Motor neuron (in vitro differentiated cells): ENCODE measurements at regions of chr12 and their contacts with region 1.

Region 1: GRCh38 chr12:57309420-57309819 is 58.4 kb upstream of the STAC3 start:
- ATAC-seq: peak in 2 of 8 experiments; percentile 26 to 47
- H3K4me3 ChIP-seq: no peak overlapping the region
- H3K27ac ChIP-seq: no peak overlapping the region
- H3K4me1 ChIP-seq: peaks cover 0 to 3% of the 10 kb centered on the region in 2 donors

Region 2: DNA sequence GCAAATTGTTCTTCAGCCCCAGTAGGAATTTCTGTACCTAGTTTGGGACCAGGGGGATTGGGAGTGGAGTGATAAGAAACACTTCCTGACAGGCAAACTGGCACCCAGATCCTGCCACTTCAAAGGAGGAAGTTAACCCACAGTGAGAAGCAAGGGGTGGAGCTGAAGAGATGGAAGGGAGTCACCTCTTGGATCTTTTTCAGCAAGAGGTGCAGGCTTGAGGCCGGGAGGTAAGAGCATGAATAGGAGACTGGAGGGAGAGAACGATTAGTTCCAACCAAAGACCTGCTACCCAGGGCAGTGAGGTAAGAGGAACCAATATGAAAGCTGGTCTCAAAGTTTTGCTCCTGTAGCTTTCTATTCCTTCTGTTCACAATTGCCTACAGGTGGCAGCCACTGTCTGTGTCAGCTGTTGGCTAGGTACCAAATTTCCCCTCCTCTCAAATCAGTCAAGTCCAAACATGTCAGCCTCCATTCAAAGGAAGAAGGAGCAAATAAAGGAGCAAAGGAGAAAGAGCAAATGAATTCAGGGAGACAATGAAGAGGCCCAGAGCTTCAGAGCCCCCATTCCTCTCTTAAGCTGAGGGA is 278.2 kb before region 1 on chr12:
- in situ Hi-C with region 1: no loop called
- ATAC-seq: peak in 7 of 8 experiments; percentile 20 to 78 (median 40)
- H3K4me3 ChIP-seq: no peak overlapping the region
- H3K27ac ChIP-seq: no peak overlapping the region
- H3K4me1 ChIP-seq: peaks cover 17 to 21% of the 10 kb centered on the region in 2 donors

Region 3: DNA sequence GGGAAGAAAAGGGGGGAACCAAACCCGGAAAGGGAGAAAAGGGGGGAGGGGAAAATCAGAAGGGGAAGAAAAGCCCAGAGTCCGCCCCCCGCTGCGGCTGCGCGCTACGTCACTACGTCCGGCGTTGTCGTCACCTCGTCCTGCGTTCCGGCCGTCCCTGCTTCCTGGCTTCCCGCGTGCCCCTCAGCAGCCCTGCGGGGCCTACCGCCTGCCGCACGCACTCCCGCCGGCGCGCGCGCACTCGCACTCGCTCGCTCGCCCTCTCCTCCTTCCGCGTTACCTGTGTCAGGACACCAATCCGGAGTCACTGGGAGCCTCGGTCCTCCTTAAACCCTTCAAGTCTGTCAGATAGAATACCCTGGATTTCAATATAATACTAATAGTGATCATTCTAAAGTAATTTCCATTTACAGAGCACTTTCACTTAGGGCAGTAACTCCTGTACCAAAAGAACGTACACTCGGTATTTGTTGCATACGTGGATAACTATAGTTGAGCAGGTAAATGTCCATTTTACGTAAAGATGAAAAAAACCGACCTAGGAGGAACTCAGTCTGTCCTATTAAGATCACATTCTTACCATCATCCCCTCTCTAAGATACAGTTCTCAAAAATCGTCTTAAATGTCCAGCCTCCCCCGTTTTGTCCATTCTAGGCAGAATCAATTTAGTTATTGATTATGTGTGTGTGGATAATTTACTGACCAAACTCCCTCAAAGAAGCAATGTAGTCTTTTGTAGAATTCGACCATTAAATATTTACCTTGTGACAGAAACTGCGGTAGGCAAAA is 121.7 kb after region 1 on chr12 and contains the start of gene R3HDM2:
- in situ Hi-C with region 1: loop called in 1 of 9 experiments (anchors 25 kb)
- ATAC-seq: peak; percentile 94 to 98 (median 96)
- H3K4me3 ChIP-seq: peak within 1 kb of the TSS; percentile 66 to 90 (median 83)
- H3K27ac ChIP-seq: peak within 1 kb of the TSS; percentile 90
- H3K4me1 ChIP-seq: peaks cover 2 to 6% of the 10 kb centered on the region in 2 donors
- total RNA-seq, gene R3HDM2: 14.7 to 75.2 (median 31.6) TPM